Prostate gland (tissue), 2 donors: ENCODE measurements at regions of chr3 and their contacts with region 1.

Region 1: DNA sequence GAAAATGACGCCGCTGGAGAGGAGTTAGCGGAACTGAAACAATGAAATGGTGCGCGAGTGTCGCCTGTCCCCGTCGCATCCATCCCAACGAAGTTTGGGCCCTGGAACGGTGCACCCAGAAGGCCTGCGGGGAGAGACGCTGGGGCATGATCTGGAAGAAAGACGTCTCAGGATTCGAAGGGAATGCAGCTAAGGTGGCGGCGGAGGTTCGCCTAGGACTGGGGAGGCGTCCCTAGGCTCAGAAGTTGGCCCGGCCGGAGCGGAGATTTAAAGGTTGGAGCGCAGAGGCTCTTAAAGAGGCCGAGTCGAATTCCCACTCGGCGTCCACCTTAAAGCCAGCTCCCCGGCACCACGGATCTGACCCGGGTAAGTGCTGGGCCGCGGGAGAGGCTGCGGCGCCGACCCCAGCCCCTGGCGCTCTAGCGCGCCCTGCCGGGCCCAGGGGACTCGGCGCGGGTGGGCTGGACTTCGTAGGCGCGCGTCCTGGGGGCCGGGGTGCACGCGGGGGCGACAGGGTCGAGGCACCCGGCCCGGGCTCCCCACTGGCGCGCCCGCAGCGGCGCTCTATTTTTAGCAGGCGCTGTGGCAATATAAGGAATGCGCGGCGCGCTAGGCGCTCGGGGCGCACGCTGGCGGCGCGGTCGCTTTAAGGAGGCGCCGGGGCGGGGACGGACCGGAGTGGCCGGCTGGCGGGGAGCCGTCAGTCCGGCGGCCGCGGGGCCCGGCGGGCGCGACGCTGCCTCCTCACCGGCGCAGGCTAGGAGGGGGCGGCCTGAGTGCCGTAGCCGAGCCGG is at the start of gene MRAS:
- DNase-seq: peak; percentile 36
- H3K4me3 ChIP-seq: peak within 1 kb of the TSS; percentile 62 to 72
- H3K27ac ChIP-seq: peak within 1 kb of the TSS; percentile 84 to 85
- H3K4me1 ChIP-seq: no peaks in the 10 kb centered on the region
- H3K27me3 ChIP-seq: no peaks in the 10 kb centered on the region
- CTCF ChIP-seq: peak in 2 of 4 experiments; percentile 42 to 53
- POLR2A ChIP-seq: peak; percentile 30
- total RNA-seq, gene MRAS: 8.7 to 25.3 TPM

Region 2: GRCh38 chr3:138174421-138175122 is 173.6 kb before region 1 on chr3 and contains the start of gene DBR1:
- intact Hi-C with region 1: no loop called
- DNase-seq: peak; percentile 83
- H3K4me3 ChIP-seq: peak within 1 kb of the TSS; percentile 62 to 67
- H3K27ac ChIP-seq: peak within 1 kb of the TSS; percentile 73
- H3K4me1 ChIP-seq: no peaks in the 10 kb centered on the region
- H3K27me3 ChIP-seq: no peaks in the 10 kb centered on the region
- CTCF ChIP-seq: peak in 2 of 4 experiments; percentile 14 to 15
- POLR2A ChIP-seq: peak; percentile 76
- total RNA-seq, gene DBR1: 9.1 to 15.8 TPM

Region 3: DNA sequence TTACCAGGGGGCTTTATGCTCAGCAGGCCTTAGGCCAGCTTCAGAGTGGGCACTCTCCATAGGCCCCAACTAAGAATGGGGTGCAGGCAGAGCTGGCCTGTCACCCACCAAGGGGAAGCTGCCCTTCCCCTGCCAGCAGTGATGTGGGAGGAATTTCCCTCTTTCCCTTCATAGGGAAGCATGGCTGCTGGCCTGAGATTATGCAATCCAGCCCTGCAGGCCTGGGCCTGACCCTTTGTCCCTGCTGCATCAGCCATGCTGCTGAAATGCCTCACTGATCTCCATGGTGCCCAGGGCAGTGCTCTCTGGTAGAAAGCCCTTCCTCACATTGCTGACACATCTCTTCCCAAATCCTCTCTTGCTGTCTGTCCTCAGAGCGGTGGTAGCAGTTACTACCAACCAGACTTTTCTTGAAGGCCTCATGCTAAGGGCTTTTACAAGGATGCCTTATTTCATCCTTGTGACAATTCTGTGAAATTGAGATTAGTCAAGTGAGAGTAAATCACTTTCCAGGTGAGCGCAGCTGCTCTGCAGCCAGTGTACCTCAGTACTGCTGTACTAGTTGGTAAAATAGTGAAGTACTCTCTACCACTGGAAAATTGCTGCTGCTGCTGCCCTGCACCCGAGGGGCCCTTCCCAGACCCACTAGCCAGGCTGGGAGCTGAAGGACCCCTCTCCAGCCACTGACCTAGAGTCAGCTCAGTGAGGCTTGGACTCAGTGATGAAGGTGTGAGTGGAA is 34.0 kb after region 1 on chr3:
- intact Hi-C with region 1: loop called (anchors 5 kb)
- DNase-seq: peak; percentile 47
- H3K4me3 ChIP-seq: no peak overlapping the region
- H3K27ac ChIP-seq: peak overlapping the region; percentile 60 to 71
- H3K4me1 ChIP-seq: no peaks in the 10 kb centered on the region
- H3K27me3 ChIP-seq: no peaks in the 10 kb centered on the region
- CTCF ChIP-seq: no peak
- POLR2A ChIP-seq: no peak

Region 4: GRCh38 chr3:138417559-138417982 is 69.4 kb after region 1 on chr3:
- intact Hi-C with region 1: loop called (anchors 5 kb)
- DNase-seq: peak; percentile 68
- H3K4me3 ChIP-seq: no peak overlapping the region
- H3K27ac ChIP-seq: no peak overlapping the region
- H3K4me1 ChIP-seq: no peaks in the 10 kb centered on the region
- H3K27me3 ChIP-seq: no peaks in the 10 kb centered on the region
- CTCF ChIP-seq: peak; percentile 74 to 90 (median 80)
- POLR2A ChIP-seq: no peak